ENCODE measurements at regions of chr12 and their contacts with region 1.

Region 1: DNA sequence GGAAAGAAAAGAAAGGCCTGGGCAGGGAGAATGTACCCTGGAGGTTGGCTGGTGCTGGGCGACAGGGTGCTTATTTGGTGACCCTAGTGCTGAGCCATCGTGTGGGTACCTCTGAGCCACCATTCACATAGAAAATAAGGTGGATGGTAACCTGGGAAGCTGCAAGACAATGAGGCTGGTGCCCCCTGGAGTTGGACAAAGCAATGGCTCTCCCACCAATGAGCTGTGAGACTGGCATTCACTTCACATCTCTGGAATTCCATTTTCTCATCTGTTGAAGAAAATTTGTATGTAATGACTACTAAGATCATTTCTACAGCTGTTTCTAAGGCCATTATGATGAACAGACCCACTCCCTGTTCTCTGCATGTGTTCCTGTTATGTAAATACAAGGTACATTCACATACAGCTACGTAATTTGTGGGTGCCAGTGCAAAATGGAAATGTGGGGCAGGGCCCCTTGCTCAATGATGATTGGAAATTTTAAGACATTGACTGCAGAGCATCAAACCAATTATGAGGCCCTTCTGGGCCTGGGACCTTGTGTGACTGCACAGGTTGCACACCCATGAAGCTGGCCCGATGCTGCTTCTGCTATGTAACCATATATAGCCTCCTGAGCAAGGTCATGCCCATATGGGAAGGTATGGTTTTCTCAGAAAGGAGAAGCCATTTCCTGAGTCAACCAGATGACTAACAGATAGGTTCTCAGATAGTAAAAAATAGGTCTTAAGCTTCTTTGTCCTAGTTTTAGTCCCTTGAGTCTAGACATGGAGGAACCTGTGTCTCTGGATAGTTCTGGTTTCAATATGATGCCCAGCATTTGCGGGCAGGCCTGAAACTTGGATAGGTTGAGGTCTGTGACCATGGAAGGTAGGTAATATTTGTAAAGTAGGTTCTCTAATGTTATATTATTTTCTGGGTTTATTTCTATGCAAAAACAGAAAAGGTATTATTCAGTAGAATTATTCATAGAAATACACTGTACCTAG is 63.4 kb upstream of the IGF1 start:
- H3K4me3 Mint-ChIP-seq: no peak overlapping the region
- H3K27ac Mint-ChIP-seq: peak overlapping the region; percentile 2
- H3K4me1 Mint-ChIP-seq: peaks cover 24% of the 10 kb centered on the region
- H3K27me3 Mint-ChIP-seq: peaks cover 21% of the 10 kb centered on the region

Region 2: DNA sequence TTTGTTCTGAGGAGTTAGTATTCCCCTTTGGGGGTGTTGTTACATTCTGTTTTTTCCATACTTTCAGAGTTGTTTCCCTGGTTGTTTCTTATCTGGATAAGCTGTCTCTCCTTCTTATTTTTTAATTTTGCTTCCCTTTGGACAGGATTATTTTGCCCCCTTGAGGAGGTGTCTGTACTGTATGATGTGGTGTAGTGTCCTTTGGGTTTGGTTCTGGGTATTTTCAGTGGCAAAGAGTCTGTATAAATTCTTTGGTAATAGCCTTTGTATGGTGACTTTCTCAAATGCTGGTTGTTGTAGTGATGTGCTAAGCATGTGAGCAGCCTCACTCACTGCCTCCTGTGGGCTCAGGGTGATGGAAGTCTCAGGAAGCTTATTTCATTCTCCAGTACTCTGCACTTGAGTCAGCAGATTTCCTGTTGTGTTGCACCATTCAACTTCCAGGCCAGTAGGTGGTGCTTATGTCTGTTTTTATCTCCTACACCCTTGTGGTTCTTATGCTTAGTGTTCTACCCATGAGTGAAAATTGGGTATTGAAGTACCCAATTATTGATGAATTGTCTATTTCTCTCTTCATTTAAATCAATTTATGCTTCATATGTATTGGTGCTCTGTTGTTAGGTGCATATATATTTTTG is 242.8 kb before region 1 on chr12:
- intact Hi-C with region 1: loop called (anchors 2 kb)
- H3K4me3 Mint-ChIP-seq: no peak overlapping the region
- H3K27ac Mint-ChIP-seq: no peak overlapping the region
- H3K4me1 Mint-ChIP-seq: no peaks in the 10 kb centered on the region
- H3K27me3 Mint-ChIP-seq: peaks cover 2% of the 10 kb centered on the region

Region 3: GRCh38 chr12:102388469-102388868 is 155.3 kb before region 1 on chr12:
- intact Hi-C with region 1: no loop called
- H3K4me3 Mint-ChIP-seq: no peak overlapping the region
- H3K27ac Mint-ChIP-seq: no peak overlapping the region
- H3K4me1 Mint-ChIP-seq: no peaks in the 10 kb centered on the region
- H3K27me3 Mint-ChIP-seq: peaks cover 4% of the 10 kb centered on the region

Measured in dendritic cell treated with granulocyte-macrophage colony-stimulating factor and Interleukin-4, amounts not matched to agents 40 ng/mL and 50 ng/mL, for 4 days (primary cell).